ENCODE measurements at regions of chr19 and their contacts with region 1.

Region 1: DNA sequence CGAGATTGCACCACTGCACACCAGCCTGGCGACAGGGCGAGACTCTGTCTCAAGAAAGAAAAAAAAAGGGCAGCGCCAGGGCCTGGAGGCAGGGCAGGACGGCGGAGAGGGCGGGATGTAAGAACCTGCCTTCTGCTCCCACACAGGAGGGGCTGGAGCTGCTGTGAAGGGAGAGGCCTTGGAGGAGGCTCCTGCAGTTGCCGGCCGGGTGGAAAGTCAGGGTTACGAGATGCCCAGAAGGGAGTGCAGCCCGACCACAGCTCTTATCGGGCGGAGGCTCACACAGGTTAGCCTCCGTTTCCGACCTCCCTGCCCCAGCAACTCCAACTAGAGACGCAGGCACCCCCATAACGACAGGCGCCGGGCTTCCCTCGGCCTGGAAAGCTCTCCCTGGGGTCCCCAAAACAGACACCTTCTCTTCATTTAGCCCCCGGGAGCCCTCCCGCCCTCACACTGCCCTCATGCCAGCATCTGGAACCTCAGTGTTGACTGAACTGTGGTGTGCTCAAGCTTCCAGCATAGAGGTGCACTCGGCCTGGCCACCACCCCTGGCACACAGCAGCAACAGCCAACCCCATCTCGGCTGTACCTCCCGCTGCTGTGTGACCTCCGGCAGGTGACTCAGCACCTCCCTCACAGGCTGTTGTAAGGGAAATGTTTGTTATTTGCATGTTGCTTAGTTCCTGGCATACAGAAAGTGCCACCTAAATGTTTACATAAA is 1.4 kb downstream of the PLPP2 start:
- DNase-seq: peak; percentile 85 to 96
- H3K4me3 ChIP-seq: peak overlapping the region; percentile 69
- H3K27ac ChIP-seq: peak overlapping the region; percentile 88
- H3K4me1 ChIP-seq: peaks cover 13% of the 10 kb centered on the region
- H3K27me3 ChIP-seq: no peaks in the 10 kb centered on the region
- CTCF ChIP-seq: no peak

Region 2: DNA sequence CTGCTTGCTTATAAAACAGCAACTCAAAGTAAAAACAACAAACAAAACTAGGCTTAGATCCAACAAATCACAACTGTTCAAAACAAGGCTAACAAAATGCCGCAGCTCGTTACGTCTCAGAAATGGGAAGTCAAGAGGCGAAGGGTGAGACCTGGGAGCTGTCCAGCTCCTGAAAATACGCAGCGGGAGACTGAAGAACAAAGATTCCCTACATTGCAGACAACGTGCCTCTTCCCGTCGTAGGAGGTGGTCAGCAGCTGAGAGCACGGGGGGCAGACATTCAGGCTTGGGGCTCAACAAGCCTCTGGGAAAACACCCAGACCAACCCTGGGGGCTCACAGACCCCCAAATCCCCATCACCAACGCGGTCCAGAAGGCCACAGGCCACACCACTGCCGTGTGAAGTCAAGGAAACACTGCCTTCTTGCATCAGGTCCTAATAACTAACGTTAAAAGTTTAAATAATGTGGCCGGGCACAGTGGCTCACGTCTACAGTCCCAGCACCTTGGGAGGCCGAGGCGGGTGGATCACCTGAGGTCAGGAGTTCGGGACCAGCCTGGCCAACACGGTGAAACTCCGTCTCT is 12.1 kb before region 1 on chr19:
- CTCF ChIA-PET with region 1: no interaction called
- POLR2A ChIA-PET with region 1: no interaction called
- intact Hi-C with region 1: no loop called
- DNase-seq: no peak
- H3K4me3 ChIP-seq: no peak overlapping the region
- H3K27ac ChIP-seq: no peak overlapping the region
- H3K4me1 ChIP-seq: no peaks in the 10 kb centered on the region
- H3K27me3 ChIP-seq: no peaks in the 10 kb centered on the region
- CTCF ChIP-seq: no peak

Region 3: GRCh38 chr19:488505-489417 is 198.9 kb after region 1 on chr19:
- CTCF ChIA-PET with region 1: no interaction called
- POLR2A ChIA-PET with region 1: no interaction called
- intact Hi-C with region 1: loop called (anchors 2 kb)
- DNase-seq: peak; percentile 75 to 94
- H3K4me3 ChIP-seq: peak overlapping the region; percentile 89
- H3K27ac ChIP-seq: peak overlapping the region; percentile 57
- H3K4me1 ChIP-seq: peaks cover 11% of the 10 kb centered on the region; the same call in 1 of the 2 replicates
- H3K27me3 ChIP-seq: no peaks in the 10 kb centered on the region
- CTCF ChIP-seq: no peak